ENCODE measurements at regions of chr11 and their contacts with region 1.

Region 1: DNA sequence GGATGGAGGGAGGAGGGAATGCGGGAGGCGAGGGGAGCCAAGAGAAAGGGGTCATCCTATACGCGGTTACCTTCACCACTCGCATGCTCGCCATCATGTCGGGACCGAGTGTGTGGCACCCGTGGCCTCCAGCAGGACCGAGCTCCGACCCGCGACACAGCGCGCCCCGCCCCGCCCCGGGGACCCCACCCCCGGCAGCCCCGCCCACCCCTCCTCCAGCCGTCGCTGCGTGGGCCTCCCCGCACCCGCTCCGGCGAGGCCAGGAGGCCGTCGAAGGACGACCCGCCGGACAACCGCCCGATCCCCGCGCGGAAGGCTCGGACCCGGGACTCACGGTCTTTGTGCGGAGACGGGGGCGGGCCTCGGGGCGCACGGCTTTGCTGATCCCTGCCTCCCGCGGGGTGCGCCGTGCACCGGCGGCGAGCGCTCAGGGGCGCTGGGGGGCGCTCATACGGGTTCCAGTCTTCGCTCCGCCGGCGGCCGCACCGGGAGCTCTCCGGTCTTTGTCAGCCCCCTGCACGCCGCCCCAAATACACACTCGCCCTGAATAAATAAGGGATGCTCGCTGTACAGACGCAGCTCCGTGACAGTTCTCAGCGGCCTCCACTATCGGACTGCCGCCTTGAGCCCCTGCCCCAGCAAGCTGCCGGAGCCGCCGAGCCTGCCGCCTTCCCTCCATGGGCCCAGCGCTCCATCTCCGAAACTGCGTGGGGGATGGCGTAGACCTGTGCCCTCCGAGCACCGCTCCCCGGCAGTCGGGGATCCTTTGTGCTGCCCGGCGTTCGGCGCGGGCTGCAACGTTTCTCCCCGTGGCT is at the start of gene UBE2L6:
- DNase-seq: peak; percentile 34
- H3K4me3 Mint-ChIP-seq: peak within 1 kb of the TSS; percentile 94
- H3K27ac Mint-ChIP-seq: peak within 1 kb of the TSS; percentile 63
- H3K4me1 Mint-ChIP-seq: peaks cover 34% of the 10 kb centered on the region
- H3K27me3 Mint-ChIP-seq: no peaks in the 10 kb centered on the region
- CTCF ChIP-seq: no peak
- total RNA-seq, gene UBE2L6: 17.0 and 17.3 TPM in 2 replicates

Region 2: GRCh38 chr11:57493507-57494503 is 73.9 kb before region 1 on chr11:
- CTCF ChIA-PET with region 1: interaction called, 12 read pairs
- POLR2A ChIA-PET with region 1: no interaction called
- intact Hi-C with region 1: no loop called
- DNase-seq: peak; percentile 82
- H3K4me3 Mint-ChIP-seq: no peak overlapping the region
- H3K27ac Mint-ChIP-seq: no peak overlapping the region
- H3K4me1 Mint-ChIP-seq: peaks cover 13% of the 10 kb centered on the region
- H3K27me3 Mint-ChIP-seq: peaks cover under 1% of the 10 kb centered on the region
- CTCF ChIP-seq: peak; percentile 88

Region 3: DNA sequence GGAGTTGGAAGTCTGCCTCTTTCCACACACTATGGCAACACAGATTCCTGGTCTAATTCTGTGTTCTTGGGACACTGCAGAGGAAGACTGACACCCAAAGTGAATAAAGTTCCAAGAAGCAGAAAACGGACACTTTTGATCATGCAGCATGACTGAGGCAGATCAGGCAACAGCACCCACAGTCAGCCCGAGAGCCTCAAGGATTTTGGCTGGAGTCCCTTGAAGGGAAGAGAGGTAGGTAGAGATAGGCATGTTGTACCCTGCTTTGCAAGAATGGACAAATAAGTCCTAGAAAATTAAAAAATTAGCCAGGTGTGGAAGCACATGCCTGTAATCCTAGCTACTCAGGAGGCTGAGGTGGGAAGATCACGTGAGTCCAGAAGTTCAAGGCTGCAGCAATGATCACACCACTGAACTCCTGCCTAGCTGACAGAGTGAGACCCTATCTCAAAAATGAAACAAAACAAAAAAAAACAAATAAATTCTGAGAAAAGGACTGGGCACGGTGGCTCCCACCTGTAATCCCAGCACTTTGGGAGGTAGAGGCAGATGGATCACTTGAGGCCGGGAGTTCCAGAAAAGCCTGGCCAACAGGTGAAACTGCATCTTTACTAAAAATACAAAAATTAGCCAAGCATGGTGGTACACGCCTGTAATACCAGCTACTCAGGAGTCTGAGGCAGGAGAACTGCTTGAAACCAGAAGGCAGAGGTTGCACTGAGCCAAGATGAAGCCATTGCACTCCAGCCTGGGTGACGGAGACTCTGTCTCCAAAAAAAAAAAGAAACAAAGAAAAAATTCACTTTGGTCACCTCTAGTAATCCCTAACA is 59.2 kb before region 1 on chr11:
- CTCF ChIA-PET with region 1: no interaction called
- POLR2A ChIA-PET with region 1: no interaction called
- intact Hi-C with region 1: no loop called
- DNase-seq: no peak
- H3K4me3 Mint-ChIP-seq: no peak overlapping the region
- H3K27ac Mint-ChIP-seq: no peak overlapping the region
- H3K4me1 Mint-ChIP-seq: no peaks in the 10 kb centered on the region
- H3K27me3 Mint-ChIP-seq: no peaks in the 10 kb centered on the region
- CTCF ChIP-seq: no peak

Region 4: DNA sequence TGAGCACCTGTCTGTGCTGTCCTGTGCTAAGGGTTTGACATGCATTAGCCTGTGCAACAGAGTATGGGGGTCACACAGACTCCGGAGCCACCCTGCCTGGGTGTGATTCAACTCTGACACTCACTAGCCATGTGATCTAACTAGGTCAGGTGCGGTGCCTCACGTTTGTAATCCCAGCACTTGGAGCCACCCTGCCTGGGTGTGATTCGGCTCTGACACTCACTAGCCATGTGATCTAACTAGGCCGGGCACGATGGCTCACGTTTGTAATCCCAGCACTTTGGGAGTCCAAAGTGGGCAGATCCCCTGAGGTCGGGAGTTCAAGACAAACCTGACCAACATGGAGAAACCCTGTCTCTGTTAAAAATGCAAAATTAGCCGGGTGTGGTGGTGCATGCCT is 11.7 kb before region 1 on chr11:
- CTCF ChIA-PET with region 1: interaction called, 16 read pairs
- POLR2A ChIA-PET with region 1: interaction called, 3 read pairs
- intact Hi-C with region 1: no loop called
- DNase-seq: no peak
- H3K4me3 Mint-ChIP-seq: no peak overlapping the region
- H3K27ac Mint-ChIP-seq: no peak overlapping the region
- H3K4me1 Mint-ChIP-seq: no peaks in the 10 kb centered on the region
- H3K27me3 Mint-ChIP-seq: no peaks in the 10 kb centered on the region
- CTCF ChIP-seq: no peak

Region 5: DNA sequence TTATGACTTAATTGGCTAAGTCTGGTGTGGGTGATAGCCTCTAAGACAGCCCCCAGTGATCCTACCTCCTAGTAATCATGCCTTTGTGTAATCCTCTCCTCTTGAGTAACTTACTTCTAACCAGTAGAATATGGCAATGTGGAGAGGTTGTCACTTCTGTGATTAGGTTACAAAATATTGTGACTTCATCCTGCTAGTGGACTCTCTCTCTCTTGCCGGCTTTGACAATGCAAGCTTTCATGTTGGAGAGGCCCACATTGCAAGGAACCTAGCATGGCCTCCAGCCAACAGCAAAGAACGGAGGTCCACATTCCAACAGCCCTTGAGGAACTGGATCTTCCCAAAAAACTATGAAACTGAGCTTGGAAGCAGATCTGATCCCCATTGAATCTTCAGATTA is 62.5 kb after region 1 on chr11:
- CTCF ChIA-PET with region 1: interaction called, 13 read pairs
- POLR2A ChIA-PET with region 1: interaction called, 3 read pairs
- intact Hi-C with region 1: no loop called
- DNase-seq: no peak
- H3K4me3 Mint-ChIP-seq: no peak overlapping the region
- H3K27ac Mint-ChIP-seq: no peak overlapping the region
- H3K4me1 Mint-ChIP-seq: no peaks in the 10 kb centered on the region
- H3K27me3 Mint-ChIP-seq: peaks cover 20% of the 10 kb centered on the region
- CTCF ChIP-seq: no peak

Region 6: DNA sequence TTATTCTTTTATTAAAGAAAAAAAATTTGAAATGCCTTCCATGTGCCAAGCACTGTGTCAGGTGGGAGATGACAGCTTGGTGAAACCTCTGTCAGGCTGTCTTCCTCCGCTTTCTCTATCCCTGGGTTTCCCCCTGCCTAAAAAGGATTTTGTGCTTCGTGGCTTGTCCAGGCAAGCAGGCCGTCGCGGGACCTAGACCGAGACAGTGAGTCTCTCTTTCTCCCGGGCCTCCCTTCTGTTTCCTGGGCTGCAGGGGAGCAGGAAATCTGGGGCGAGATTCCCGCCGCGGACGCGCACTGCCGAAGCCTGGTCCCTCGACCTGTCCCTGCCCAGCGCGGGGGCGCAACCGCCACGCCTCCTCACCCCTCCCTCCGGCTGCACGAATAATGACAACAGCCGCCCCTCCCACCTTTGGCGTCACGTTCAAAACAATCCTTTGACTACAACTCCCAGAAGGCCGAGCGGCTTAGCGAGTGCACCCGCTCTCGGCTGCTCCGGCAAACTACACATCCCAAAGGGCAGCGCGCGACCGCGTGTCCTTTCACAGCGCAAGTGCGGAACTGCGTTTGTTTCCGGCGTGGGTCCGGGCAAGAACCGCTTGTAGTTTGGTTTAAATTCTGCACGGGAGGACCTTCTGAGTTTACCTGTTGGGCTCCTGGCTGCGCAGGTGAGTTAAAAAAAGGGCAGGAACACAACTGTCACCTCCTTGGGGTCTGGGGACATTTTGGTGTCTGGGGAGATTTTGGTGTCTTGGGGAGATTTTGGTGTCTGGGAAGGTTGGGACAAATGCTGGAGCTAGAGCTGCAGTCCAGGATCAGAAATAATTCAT is 89.7 kb after region 1 on chr11 and contains the start of gene CLP1:
- CTCF ChIA-PET with region 1: interaction called, 6 read pairs
- POLR2A ChIA-PET with region 1: interaction called, 13 read pairs
- intact Hi-C with region 1: no loop called
- DNase-seq: peak; percentile 99
- H3K4me3 Mint-ChIP-seq: peak within 1 kb of the TSS; percentile 100
- H3K27ac Mint-ChIP-seq: peak within 1 kb of the TSS; percentile 97
- H3K4me1 Mint-ChIP-seq: peaks cover 13% of the 10 kb centered on the region
- H3K27me3 Mint-ChIP-seq: no peaks in the 10 kb centered on the region
- CTCF ChIP-seq: no peak
- total RNA-seq, gene CLP1: 8.6 and 9.2 TPM in 2 replicates

Region 7: DNA sequence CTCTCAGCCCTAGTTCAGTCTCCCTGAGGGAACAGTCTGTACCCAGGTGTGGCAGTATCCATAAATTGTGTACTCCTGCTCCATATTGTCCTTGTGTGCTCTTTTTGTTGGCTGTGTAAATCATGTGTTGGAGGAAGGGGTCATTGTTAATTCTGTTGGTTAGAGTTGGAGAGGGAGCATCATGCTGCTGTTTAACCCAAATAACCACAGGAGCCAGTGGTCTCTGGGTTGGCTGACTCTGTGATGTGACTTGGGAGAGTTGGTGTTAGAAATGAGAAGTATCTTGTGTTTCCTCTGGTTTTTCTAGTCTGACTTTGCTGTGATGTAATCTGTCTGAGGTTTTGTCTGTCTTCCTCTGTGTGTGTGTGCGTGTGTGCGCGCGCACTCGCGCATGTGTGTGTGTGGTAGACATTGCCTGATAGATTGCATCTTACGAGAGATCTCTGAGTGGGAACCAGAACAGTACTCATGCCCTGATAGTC is 224.4 kb after region 1 on chr11:
- CTCF ChIA-PET with region 1: no interaction called
- POLR2A ChIA-PET with region 1: no interaction called
- intact Hi-C with region 1: no loop called
- DNase-seq: peak; percentile 49
- H3K4me3 Mint-ChIP-seq: peak overlapping the region; percentile 70
- H3K27ac Mint-ChIP-seq: peak overlapping the region; percentile 84
- H3K4me1 Mint-ChIP-seq: peaks cover 46% of the 10 kb centered on the region
- H3K27me3 Mint-ChIP-seq: no peaks in the 10 kb centered on the region
- CTCF ChIP-seq: no peak

Region 8: GRCh38 chr11:58513747-58514367 is 946.1 kb after region 1 on chr11:
- CTCF ChIA-PET with region 1: no interaction called
- POLR2A ChIA-PET with region 1: no interaction called
- intact Hi-C with region 1: loop called (anchors 1 kb)
- DNase-seq: peak; percentile 76
- H3K4me3 Mint-ChIP-seq: no peak overlapping the region
- H3K27ac Mint-ChIP-seq: no peak overlapping the region
- H3K4me1 Mint-ChIP-seq: peaks cover 5% of the 10 kb centered on the region
- H3K27me3 Mint-ChIP-seq: peaks cover 10% of the 10 kb centered on the region
- CTCF ChIP-seq: peak; percentile 75

Measured in MCF 10A (cell line).